H1 (cell line): ENCODE measurements at regions of chr20 and their contacts with region 1.

Region 1: DNA sequence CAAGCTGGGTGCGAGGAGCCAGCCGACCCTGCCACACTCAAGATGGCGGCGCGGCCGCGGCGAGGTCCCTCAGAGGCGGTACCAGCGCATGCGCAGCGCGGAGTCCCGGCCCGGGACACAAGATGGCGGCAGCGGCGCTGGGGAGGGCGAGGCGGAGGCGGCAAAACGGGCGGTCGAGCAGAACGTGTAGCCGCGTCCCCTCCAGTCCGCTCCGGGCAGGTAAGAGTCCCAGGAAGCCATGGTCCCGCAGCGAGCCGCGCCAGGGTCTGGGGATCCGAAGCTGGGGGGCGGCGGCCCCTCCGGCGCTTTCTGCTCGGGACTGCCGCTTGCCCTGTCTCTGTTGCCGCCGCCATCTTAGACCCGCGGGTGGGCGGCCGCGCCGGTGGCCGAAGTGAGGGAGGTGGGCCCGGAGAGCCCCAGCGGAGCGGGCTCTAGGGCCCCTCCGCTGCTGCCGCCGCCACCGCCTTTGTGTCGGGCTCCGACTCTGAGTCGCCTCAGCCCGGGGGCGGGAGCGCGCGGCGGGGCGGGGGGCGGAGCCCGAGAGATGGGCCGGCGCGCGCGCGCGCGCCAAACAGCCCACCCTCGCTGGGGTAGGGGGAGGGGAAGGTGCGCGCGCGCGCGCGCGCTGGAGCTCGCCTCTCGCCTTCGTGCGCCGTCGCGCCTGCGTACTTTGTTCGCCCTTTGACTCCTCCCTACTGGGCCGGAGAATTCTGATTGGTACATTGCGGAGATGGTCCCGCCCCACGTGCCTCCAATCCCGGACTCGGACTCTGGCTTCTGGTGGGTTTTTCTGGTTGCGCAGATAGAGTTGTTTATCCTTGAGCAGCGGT is at the start of gene PCIF1:
- DNase-seq: peak; percentile 91 to 99
- H3K4me3 ChIP-seq: peak within 1 kb of the TSS; percentile 76 to 91 (median 86)
- H3K27ac ChIP-seq: peak within 1 kb of the TSS; percentile 100
- H3K4me1 ChIP-seq: peaks cover 5 to 31% (median 14%) of the 10 kb centered on the region in 4 experiments
- H3K27me3 ChIP-seq: no peaks in the 10 kb centered on the region
- CTCF ChIP-seq: no peak; a peak in 1 of 4 replicates
- EP300 ChIP-seq: peak in 1 of 2 experiments; percentile 21; a peak in 1 of 3 replicates
- POLR2A ChIP-seq: peak; percentile 94 to 95
- RAD21 ChIP-seq: no peak
- total RNA-seq, gene PCIF1: 27.2 and 30.3 TPM in 2 replicates

Region 2: DNA sequence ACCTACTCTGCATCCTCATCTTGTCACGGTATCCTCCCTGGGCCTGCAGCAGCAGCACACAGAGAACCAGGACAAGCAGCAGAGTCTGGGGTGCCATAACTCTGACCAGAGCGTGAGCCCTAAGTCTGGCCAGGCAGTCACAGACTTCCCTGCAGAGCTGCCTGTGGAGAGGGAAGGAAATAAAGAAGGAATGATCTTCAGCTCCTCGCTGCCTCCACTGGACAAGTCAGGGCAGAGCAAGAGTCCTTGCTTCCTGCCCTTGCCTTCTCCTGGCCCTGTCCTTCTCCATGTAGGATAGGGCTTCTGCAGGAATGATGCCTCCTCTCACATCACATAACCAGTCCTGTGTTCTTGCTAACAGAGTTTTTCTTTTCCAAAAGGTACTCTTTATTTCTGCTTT is 248.9 kb before region 1 on chr20:
- CTCF ChIA-PET with region 1: no interaction called
- POLR2A ChIA-PET with region 1: no interaction called
- DNase-seq: peak; percentile 19 to 55
- H3K4me3 ChIP-seq: no peak overlapping the region
- H3K27ac ChIP-seq: no peak overlapping the region
- H3K4me1 ChIP-seq: no peaks in the 10 kb centered on the region
- H3K27me3 ChIP-seq: no peaks in the 10 kb centered on the region
- CTCF ChIP-seq: peak; percentile 45 to 73 (median 72)
- EP300 ChIP-seq: no peak
- POLR2A ChIP-seq: no peak
- RAD21 ChIP-seq: peak in 1 of 2 experiments; percentile 51; a peak in 3 of 4 replicates

Region 3: DNA sequence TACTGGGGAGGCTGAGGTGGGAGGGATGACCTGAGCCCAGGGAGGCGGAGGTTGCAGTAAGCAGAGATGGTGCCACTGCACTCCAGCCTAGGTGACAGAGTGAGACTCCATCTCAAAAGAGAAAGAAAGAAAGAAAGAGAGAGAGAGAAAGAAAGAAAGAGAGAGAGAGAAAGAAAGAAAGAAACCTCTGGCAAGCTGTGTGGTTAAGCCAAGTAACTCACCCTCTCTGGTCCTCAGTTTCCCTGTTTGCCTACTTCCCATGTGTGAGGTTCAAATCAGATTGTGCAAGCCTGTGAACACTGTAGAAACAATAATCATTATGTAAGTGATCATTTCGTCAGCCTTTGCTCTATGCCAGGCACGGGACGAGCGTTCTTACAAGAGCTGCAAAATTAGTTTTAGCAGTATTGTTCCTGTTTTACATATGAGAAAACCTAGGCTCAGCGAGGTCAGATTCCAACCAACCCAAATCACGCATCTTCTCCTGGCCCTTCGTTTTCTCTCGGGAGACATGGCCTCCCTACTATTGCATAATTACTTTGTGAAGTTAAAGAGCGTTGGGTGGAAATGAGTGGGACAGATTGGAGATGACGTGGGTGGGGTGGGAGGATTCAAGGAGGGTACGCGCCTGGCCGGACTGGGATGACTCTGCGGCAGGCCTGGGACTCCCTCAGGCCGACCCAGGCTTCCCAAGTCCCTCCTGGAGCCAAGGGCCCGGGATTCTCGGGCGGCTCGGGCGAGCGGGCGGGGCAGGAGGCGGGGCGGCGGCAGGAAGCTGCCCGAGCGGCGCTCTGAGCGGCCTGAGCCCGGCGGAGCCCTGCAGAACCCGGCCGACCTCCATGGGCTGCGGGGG is 101.5 kb before region 1 on chr20 and contains the start of gene SNX21:
- CTCF ChIA-PET with region 1: interaction called, 4 read pairs
- POLR2A ChIA-PET with region 1: interaction called, 22 read pairs
- DNase-seq: peak in 1 of 2 experiments; percentile 90
- H3K4me3 ChIP-seq: peak within 1 kb of the TSS; percentile 61 to 77 (median 74)
- H3K27ac ChIP-seq: peak within 1 kb of the TSS; percentile 73
- H3K4me1 ChIP-seq: peaks cover 0 to 17% (median 8%) of the 10 kb centered on the region in 4 experiments; a peak in 6 of 7 replicates
- H3K27me3 ChIP-seq: no peaks in the 10 kb centered on the region
- CTCF ChIP-seq: no peak
- EP300 ChIP-seq: peak in 1 of 2 experiments; percentile 14; a peak in 1 of 3 replicates
- POLR2A ChIP-seq: peak in 1 of 2 experiments; percentile 58; a peak in 1 of 3 replicates
- RAD21 ChIP-seq: 0 out of 4 replicates have a peak, but pooled peaks of 1 of the 2 experiments have one; percentile 4
- total RNA-seq, gene SNX21: 16.1 and 16.8 TPM in 2 replicates

Region 4: DNA sequence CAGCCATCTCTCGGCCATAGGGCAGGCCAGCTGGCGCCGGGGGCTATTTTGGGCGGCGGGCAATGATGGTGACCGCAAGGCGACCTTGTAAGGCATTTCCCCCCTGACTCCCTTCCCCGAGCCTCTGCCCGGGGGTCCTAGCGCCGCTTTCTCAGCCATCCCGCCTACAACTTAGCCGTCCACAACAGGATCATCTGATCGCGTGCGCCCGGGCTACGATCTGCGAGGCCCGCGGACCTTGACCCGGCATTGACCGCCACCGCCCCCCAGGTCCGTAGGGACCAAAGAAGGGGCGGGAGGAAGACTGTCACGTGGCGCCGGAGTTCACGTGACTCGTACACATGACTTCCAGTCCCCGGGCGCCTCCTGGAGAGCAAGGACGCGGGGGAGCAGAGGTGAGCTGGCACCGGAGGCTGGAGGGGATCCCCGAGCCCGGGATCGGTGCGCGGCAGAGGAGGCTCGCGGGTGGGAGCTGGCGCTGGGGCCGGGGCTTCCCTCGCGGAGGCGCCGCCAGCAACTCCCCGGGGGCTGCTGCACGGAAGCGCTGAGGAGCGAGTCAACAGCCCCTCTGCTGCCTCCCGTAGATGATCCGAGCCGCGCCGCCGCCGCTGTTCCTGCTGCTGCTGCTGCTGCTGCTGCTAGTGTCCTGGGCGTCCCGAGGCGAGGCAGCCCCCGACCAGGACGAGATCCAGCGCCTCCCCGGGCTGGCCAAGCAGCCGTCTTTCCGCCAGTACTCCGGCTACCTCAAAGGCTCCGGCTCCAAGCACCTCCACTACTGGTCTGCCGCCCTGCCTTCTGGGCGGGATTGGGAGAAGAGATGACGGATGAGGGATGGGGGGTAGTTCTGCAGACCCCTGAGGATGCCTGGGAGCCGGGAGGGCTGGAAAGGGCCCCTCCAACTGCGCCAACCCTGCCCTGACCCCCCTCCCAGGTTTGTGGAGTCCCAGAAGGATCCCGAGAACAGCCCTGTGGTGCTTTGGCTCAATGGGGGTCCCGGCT is 43.5 kb before region 1 on chr20 and contains the starts of genes CTSA and NEURL2:
- CTCF ChIA-PET with region 1: interaction called, 15 read pairs
- POLR2A ChIA-PET with region 1: interaction called, 41 read pairs
- DNase-seq: peak; percentile 79 to 96
- H3K4me3 ChIP-seq: peak within 1 kb of the TSS; percentile 55 to 79 (median 74)
- H3K27ac ChIP-seq: peak within 1 kb of the TSS; percentile 38
- H3K4me1 ChIP-seq: peaks cover 0 to 10% (median 6%) of the 10 kb centered on the region in 4 experiments; a peak in 6 of 7 replicates
- H3K27me3 ChIP-seq: no peaks in the 10 kb centered on the region
- CTCF ChIP-seq: no peak
- EP300 ChIP-seq: peak in 1 of 2 experiments; percentile 91; a peak in 2 of 3 replicates
- POLR2A ChIP-seq: peak; percentile 43 to 69
- RAD21 ChIP-seq: peak in 1 of 2 experiments; percentile 1; a peak in 1 of 4 replicates
- total RNA-seq, gene CTSA: 49.7 and 52.5 TPM in 2 replicates
- total RNA-seq, gene NEURL2: 5.2 and 6.9 TPM in 2 replicates

Region 5: DNA sequence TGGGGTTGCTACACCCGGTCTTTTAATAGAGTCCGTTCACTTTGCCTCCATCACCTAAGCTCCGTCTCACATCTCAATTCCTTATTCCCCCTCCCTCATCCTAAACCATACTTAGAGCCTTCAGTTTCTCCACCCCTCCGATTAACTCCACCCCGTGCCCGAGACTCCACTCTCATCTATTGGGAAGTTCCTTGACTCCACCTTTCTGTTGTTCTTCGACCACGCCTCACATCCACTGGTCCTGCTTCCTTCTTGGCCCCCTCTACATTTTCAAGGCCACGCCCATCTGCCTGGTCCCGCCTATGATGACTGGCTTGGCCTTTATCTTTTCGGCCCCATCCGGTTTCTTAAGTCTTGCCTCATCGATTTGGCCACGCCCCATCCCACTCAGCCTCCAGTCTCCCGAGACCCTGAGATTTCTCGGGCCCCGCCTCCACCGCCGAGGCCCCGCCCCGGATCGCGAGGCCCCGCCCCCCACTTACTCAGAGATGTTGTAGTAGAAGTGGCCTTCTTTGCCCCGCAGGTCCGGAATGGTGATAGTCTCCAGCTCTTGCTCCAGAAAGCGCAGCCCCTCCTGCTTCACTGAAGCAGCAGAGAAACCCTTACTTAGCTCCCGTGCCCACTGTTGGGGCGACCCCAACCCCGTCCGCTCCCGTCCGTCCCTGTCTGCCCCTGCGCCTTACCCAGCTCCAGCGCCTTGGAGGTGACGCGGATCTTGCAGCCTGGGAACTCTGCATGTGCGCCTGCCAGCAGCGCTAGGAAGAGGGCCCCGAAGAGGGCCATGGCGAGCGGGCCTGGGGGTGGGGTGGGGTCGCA is 23.9 kb before region 1 on chr20:
- CTCF ChIA-PET with region 1: interaction called, 12 read pairs
- POLR2A ChIA-PET with region 1: interaction called, 65 read pairs
- DNase-seq: peak; percentile 99 to 100
- H3K4me3 ChIP-seq: peak overlapping the region; percentile 52 to 81 (median 70)
- H3K27ac ChIP-seq: peak overlapping the region; percentile 58; the same call in 1 of the 2 replicates
- H3K4me1 ChIP-seq: peaks cover 0 to 2% (median 0%) of the 10 kb centered on the region in 4 experiments; a peak in 3 of 7 replicates
- H3K27me3 ChIP-seq: no peaks in the 10 kb centered on the region
- CTCF ChIP-seq: no peak
- EP300 ChIP-seq: no peak
- POLR2A ChIP-seq: peak; percentile 59 to 68; a peak in 2 of 3 replicates
- RAD21 ChIP-seq: no peak

Region 6: GRCh38 chr20:45957081-45957941 is 22.5 kb after region 1 on chr20:
- CTCF ChIA-PET with region 1: interaction called, 9 read pairs
- POLR2A ChIA-PET with region 1: interaction called, 283 read pairs
- DNase-seq: no peak
- H3K4me3 ChIP-seq: no peak overlapping the region
- H3K27ac ChIP-seq: no peak overlapping the region
- H3K4me1 ChIP-seq: no peaks in the 10 kb centered on the region
- H3K27me3 ChIP-seq: no peaks in the 10 kb centered on the region
- CTCF ChIP-seq: no peak
- EP300 ChIP-seq: no peak
- POLR2A ChIP-seq: no peak
- RAD21 ChIP-seq: no peak